Activated CD4-positive, alpha-beta T cell treated with anti-CD3 and anti-CD28 coated beads for 36 hours (primary cell): ENCODE measurements at regions of chr11 and their contacts with region 1.

Region 1: DNA sequence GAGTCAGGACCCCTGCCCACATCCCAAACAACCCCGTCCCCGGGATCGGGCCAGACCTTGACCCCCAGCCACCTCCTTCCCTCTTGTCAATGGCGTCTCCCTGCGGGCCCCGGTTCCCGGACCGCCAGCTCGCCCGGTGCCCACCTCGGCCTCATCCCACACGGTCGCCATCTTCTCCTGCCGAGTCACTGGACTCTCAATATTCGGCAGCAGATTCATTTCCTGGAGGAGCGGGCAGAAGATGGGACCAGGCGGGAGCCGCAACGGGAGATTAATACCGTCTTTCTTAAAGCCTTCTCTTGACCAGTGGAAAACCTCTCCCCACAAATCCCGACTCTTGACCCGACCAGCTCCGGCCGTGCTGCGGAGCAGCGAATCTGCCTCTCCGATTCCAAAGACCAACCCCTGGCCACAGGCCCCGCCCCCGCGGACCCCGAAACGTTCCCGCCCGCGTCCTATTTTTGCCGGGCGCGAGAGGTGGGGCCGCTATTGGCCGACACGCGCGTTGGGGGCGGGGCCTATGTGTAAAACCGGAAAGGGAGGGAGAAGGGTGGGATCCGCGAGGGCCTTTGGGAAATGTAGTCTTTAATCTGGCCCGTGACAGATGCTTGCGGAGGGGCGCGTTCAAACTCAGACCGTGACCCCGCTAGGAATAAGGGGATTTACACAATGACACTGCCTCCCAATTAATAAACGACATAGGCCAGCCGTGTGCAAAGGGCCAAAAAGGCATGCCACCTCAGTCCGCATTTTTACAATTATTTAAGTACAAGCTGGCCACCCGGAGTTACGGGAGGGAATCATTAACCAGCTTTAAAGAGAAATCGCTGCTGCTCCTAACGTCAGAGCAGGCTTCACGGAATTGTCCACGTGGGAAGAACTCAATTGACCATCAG is at the start of gene PSMC3:
- DNase-seq: peak; percentile 100
- ATAC-seq: peak; percentile 98
- H3K4me3 Mint-ChIP-seq: peak within 1 kb of the TSS; percentile 100
- H3K27ac Mint-ChIP-seq: peak within 1 kb of the TSS; percentile 100
- H3K4me1 Mint-ChIP-seq: peaks cover 24% of the 10 kb centered on the region
- H3K27me3 Mint-ChIP-seq: no peaks in the 10 kb centered on the region
- total RNA-seq, gene PSMC3: 147 to 167 TPM

Region 2: GRCh38 chr11:46936138-46937110 is 489.9 kb before region 1 on chr11 and contains the start of gene CSTPP1:
- CTCF ChIA-PET with region 1: no interaction called
- POLR2A ChIA-PET with region 1: no interaction called
- intact Hi-C with region 1: loop called in 1 of 2 experiments (anchors 1 kb)
- DNase-seq: peak; percentile 97
- ATAC-seq: peak; percentile 96
- H3K4me3 Mint-ChIP-seq: peak within 1 kb of the TSS; percentile 86
- H3K27ac Mint-ChIP-seq: peak within 1 kb of the TSS; percentile 88
- H3K4me1 Mint-ChIP-seq: peaks cover 16% of the 10 kb centered on the region
- H3K27me3 Mint-ChIP-seq: peaks cover 5% of the 10 kb centered on the region
- total RNA-seq, gene CSTPP1: 17.9 to 18.6 TPM

Region 3: GRCh38 chr11:47248664-47249377 is 177.5 kb before region 1 on chr11 and contains the start of gene ACP2:
- CTCF ChIA-PET with region 1: interaction called, 6 read pairs
- POLR2A ChIA-PET with region 1: interaction called, 3 read pairs
- intact Hi-C with region 1: loop called in 1 of 2 experiments (anchors 1 kb)
- DNase-seq: peak; percentile 94
- ATAC-seq: peak; percentile 97
- H3K4me3 Mint-ChIP-seq: peak within 1 kb of the TSS; percentile 78
- H3K27ac Mint-ChIP-seq: peak within 1 kb of the TSS; percentile 95
- H3K4me1 Mint-ChIP-seq: peaks cover 22% of the 10 kb centered on the region
- H3K27me3 Mint-ChIP-seq: no peaks in the 10 kb centered on the region
- total RNA-seq, gene ACP2: 10.2 to 11.2 TPM

Region 4: GRCh38 chr11:47394322-47395222 is 31.7 kb before region 1 on chr11:
- CTCF ChIA-PET with region 1: no interaction called
- POLR2A ChIA-PET with region 1: interaction called, 10 read pairs
- intact Hi-C with region 1: no loop called
- DNase-seq: peak; percentile 80
- ATAC-seq: peak; percentile 89
- H3K4me3 Mint-ChIP-seq: peak overlapping the region; percentile 23
- H3K27ac Mint-ChIP-seq: peak overlapping the region; percentile 95
- H3K4me1 Mint-ChIP-seq: peaks cover 23% of the 10 kb centered on the region
- H3K27me3 Mint-ChIP-seq: no peaks in the 10 kb centered on the region

Region 5: DNA sequence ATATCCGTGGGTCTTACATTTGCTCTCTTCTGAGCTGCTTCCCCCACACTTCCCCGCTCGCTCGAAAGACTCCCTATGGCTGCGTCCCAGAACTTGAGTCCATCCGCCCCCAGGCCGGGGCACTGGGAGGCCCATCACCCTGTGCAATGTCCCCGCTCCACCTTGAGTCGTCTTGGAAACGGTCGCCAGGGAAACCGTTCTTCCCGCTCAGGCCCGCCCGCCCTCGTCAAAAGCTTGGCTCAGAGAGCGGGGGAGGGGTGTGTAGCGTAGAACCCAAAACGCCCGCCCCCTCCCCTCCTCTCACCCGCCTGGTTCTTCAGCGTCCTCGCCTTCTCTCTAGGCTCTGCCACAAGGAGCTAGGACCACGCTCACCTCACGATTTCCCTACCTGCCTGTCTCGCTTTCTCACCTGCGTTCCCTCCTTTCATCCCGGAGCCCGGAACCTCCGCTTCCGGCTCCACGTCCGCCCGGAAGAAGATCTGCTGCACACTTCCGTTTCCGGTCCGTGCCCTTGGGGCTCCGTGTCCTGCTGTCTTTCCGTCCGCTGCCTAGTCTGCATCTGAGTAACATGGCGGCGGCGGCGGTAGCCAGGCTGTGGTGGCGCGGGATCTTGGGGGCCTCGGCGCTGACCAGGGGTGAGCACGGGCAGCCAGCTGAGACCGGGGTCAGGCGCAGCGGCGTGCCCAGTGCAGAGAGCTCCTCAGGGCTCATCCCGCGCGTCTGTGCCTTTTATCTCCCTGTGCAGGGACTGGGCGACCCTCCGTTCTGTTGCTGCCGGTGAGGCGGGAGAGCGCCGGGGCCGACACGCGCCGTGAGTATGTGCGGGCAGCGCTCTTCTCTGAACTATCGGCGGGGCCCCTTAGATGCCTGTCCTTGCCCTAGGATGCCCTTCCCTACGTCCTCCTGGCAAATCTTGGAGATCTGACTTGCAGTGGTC is 152.5 kb after region 1 on chr11 and contains the starts of genes KBTBD4 and NDUFS3:
- CTCF ChIA-PET with region 1: no interaction called
- POLR2A ChIA-PET with region 1: no interaction called
- intact Hi-C with region 1: loop called in 1 of 2 experiments (anchors 1 kb)
- DNase-seq: peak; percentile 92
- ATAC-seq: peak; percentile 96
- H3K4me3 Mint-ChIP-seq: peak within 1 kb of the TSS; percentile 87
- H3K27ac Mint-ChIP-seq: peak within 1 kb of the TSS; percentile 93
- H3K4me1 Mint-ChIP-seq: peaks cover 39% of the 10 kb centered on the region
- H3K27me3 Mint-ChIP-seq: no peaks in the 10 kb centered on the region
- total RNA-seq, gene KBTBD4: 11.9 to 18.4 TPM
- total RNA-seq, gene NDUFS3: 96.9 to 108 TPM